Mammary epithelial cell (primary cell): ENCODE measurements at regions of chr7 and their contacts with region 1.

Region 1: GRCh38 chr7:151696721-151697514 is 177.2 kb upstream of the RHEB start:
- DNase-seq: peak; percentile 63
- H3K4me3 ChIP-seq: no peak overlapping the region
- H3K27ac ChIP-seq: peak overlapping the region; percentile 80
- H3K4me1 ChIP-seq: peaks cover 37% of the 10 kb centered on the region
- H3K27me3 ChIP-seq: no peaks in the 10 kb centered on the region
- CTCF ChIP-seq: peak; percentile 9 to 53

Region 2: DNA sequence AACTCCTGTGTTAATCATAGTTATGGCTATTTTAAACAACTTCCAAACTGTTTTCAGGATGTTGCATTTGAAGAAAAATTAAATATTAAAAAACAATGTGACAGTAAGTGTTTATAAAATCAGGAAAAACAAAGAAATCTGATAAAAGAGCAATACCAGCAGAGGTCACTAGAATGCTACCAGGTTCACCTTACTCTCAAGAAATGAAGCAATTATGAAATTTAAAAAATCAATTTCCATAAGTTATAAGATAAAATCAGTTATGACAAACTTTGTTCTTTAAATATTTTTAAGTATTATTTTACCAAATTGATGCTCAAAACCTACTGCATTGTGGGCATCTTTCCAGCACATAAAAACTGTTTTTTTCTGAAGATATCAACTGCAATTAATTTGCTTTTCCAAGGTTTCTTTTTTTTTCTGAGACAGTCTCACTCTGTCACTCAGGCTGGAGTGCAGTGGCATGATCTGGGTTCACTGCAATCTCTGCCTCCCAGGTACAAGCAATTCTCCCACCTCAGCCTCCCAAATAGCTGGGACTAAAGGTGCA is 126.5 kb before region 1 on chr7:
- CTCF ChIA-PET with region 1: no interaction called
- dilution Hi-C with region 1: no loop called
- in situ Hi-C with region 1: no loop called
- intact Hi-C with region 1: loop called (anchors 2 kb)
- DNase-seq: no peak
- H3K4me3 ChIP-seq: no peak overlapping the region
- H3K27ac ChIP-seq: no peak overlapping the region
- H3K4me1 ChIP-seq: peaks cover 10% of the 10 kb centered on the region
- H3K27me3 ChIP-seq: no peaks in the 10 kb centered on the region
- CTCF ChIP-seq: peak; percentile 41 to 47

Region 3: GRCh38 chr7:151631968-151632749 is 64.8 kb before region 1 on chr7:
- CTCF ChIA-PET with region 1: interaction called, 3 read pairs
- dilution Hi-C with region 1: no loop called
- in situ Hi-C with region 1: no loop called
- intact Hi-C with region 1: loop called (anchors 2 kb)
- DNase-seq: peak; percentile 78
- H3K4me3 ChIP-seq: peak overlapping the region; percentile 79 to 92 (median 87)
- H3K27ac ChIP-seq: peak overlapping the region; percentile 61
- H3K4me1 ChIP-seq: peaks cover 26% of the 10 kb centered on the region
- H3K27me3 ChIP-seq: no peaks in the 10 kb centered on the region
- CTCF ChIP-seq: peak; percentile 15 to 16

Region 4: GRCh38 chr7:151660141-151660540 is 36.8 kb before region 1 on chr7:
- CTCF ChIA-PET with region 1: no interaction called
- dilution Hi-C with region 1: loop called (anchors 5 kb)
- in situ Hi-C with region 1: no loop called
- intact Hi-C with region 1: no loop called
- DNase-seq: no peak
- H3K4me3 ChIP-seq: no peak overlapping the region
- H3K27ac ChIP-seq: no peak overlapping the region
- H3K4me1 ChIP-seq: no peaks in the 10 kb centered on the region
- H3K27me3 ChIP-seq: no peaks in the 10 kb centered on the region
- CTCF ChIP-seq: no peak

Region 5: DNA sequence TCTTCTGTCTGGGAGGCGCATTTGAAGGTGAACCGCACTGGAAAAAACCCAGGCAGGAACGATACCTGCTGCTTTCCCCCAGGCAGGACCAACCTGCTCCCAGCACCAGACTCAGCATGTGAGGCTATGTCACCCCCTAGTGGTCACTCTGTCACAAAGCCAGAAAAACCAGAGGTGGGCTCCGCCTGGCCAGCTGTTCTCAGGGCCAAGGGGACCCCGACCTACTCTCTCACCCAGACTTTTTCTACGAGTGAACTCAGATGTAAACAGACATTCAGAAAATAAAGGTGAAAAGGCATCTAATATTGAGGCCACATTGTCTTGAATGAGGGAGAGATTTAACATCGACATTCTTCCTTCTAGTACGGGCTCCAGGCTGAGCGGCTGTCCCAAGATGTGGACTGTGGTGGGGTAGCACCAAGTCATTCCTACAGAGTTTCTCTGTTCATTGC is 62.7 kb after region 1 on chr7:
- CTCF ChIA-PET with region 1: no interaction called
- dilution Hi-C with region 1: no loop called
- in situ Hi-C with region 1: no loop called
- intact Hi-C with region 1: loop called (anchors 2 kb)
- DNase-seq: peak; percentile 60
- H3K4me3 ChIP-seq: no peak overlapping the region
- H3K27ac ChIP-seq: no peak overlapping the region
- H3K4me1 ChIP-seq: peaks cover 31% of the 10 kb centered on the region
- H3K27me3 ChIP-seq: no peaks in the 10 kb centered on the region
- CTCF ChIP-seq: peak; percentile 79 to 97